Endothelial cell of umbilical vein (primary cell): ENCODE measurements at regions of chr18 and their contacts with region 1.

Region 1: DNA sequence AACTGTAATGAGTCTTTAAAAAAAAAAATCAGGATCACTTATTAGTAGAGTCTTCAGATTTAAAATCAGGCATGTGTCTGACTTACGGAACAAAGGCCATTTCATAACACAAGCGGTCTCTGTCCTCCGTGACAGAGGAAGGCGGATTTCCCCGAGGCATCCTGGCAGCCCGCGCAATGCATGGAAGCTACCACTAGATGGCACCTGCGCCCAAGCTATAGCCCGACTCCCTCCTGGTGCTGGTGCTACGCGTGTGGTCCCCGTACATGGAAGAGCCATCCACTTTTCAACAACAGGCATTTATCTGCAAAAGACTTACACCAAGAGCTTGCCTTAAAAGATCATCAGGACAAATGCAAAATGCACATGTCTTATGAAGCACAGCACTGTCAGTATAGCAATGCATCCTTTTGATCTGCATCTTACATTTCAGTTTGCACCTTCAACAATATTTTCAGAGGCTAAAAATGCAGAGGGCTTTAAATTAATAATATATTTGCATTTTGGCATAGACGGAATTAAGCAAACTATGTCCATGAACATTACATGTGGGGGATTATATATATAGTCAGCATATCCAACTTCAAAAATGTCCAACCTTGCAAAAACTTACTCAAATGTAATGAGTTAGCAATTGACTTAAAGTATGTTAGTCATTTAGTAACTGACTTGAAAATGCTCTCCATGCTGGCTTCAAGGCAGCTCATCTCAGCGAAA is 96.0 kb downstream of the ZNF516 start:
- DNase-seq: peak; percentile 66
- H3K4me3 ChIP-seq: no peak overlapping the region
- H3K27ac ChIP-seq: no peak overlapping the region
- H3K4me1 ChIP-seq: no peaks in the 10 kb centered on the region
- H3K27me3 ChIP-seq: no peaks in the 10 kb centered on the region
- CTCF ChIP-seq: peak; percentile 87 to 97
- POLR2A ChIP-seq: no peak

Region 2: DNA sequence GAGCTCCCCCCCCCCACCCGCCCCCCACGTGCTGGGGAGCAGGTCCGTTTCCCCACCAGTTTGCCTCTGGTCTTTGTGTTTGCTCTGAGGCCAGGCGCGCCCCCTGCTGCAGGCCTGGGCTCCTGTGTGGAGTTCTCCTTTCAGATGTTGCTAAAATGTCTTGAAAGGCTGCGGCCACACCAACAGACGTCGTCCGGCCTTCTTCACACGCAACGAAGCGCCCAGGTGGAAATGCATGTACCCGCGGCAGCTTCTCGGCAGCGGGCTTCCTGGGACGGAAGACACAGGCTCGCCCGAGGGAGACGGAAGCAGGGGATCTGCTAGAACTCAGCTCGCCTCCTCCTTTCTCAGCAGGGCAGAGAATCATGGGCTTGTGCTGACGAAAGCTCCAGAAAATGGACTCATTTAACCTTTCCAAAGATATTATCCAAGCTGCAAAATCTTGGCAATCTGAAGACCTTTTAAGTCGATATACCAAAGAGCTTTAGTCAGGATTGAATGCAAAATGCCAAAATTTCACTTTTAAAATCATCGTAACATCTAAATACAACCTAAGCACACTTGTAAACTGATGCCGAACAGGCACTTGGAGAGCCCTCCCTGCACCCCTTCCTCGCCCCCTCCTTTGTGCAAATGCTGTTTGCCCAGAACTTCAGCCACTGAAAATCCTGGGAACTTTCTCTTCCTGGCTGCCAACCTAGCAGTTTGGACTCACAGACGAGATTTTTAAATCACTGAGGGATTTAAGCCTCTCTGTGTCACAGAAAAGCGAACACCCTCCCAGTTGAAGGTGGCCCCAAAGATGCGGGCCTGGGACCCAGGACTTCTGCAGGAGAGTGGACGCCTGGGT is 221.5 kb after region 1 on chr18:
- CTCF ChIA-PET with region 1: interaction called, 34 read pairs
- POLR2A ChIA-PET with region 1: no interaction called
- dilution Hi-C with region 1: no loop called
- intact Hi-C with region 1: loop called (anchors 1 kb)
- DNase-seq: peak; percentile 24
- H3K4me3 ChIP-seq: no peak overlapping the region
- H3K27ac ChIP-seq: no peak overlapping the region
- H3K4me1 ChIP-seq: no peaks in the 10 kb centered on the region
- H3K27me3 ChIP-seq: peaks cover 7 to 15% of the 10 kb centered on the region in 2 experiments
- CTCF ChIP-seq: peak in 1 of 2 donors; percentile 67
- POLR2A ChIP-seq: no peak

Region 3: GRCh38 chr18:76686737-76687262 is 287.7 kb after region 1 on chr18:
- CTCF ChIA-PET with region 1: interaction called, 75 read pairs
- POLR2A ChIA-PET with region 1: no interaction called
- dilution Hi-C with region 1: no loop called
- intact Hi-C with region 1: loop called (anchors 1 kb)
- DNase-seq: peak; percentile 47
- H3K4me3 ChIP-seq: no peak overlapping the region
- H3K27ac ChIP-seq: no peak overlapping the region
- H3K4me1 ChIP-seq: no peaks in the 10 kb centered on the region
- H3K27me3 ChIP-seq: peaks cover 0 to 2% of the 10 kb centered on the region in 2 experiments
- CTCF ChIP-seq: peak; percentile 37 to 55
- POLR2A ChIP-seq: no peak

Region 4: GRCh38 chr18:76709659-76710645 is 310.9 kb after region 1 on chr18:
- CTCF ChIA-PET with region 1: interaction called, 169 read pairs
- POLR2A ChIA-PET with region 1: no interaction called
- dilution Hi-C with region 1: no loop called
- intact Hi-C with region 1: loop called (anchors 1 kb)
- DNase-seq: peak; percentile 55
- H3K4me3 ChIP-seq: no peak overlapping the region
- H3K27ac ChIP-seq: no peak overlapping the region
- H3K4me1 ChIP-seq: no peaks in the 10 kb centered on the region
- H3K27me3 ChIP-seq: no peaks in the 10 kb centered on the region
- CTCF ChIP-seq: peak; percentile 72 to 84
- POLR2A ChIP-seq: no peak